ENCODE measurements at regions of chr12 and their contacts with region 1.

Region 1: DNA sequence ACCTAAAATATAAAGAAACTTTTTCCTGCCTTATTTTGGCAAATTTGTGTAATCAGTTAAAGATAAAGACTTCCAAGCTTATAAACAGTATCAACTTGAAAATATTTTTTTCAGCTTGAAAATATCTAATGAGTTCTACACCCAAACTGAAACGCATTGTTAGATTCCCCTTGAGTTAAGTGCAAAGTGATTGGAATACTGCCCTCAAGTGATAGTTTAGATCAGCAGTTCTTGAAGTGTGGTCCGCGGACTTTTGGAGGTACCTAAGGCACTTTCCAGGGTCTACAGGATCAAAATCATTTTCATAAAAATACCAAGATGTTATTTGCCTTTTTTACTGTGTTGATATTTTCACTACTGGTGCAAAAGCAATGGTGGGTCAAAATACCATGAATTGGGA is 87.9 kb downstream of the FAR2 start:
- DNase-seq: no peak
- H3K4me3 ChIP-seq: no peak overlapping the region
- H3K4me3 Mint-ChIP-seq: no peak overlapping the region
- H3K27ac Mint-ChIP-seq: no peak overlapping the region
- H3K4me1 ChIP-seq: no peaks in the 10 kb centered on the region
- H3K4me1 Mint-ChIP-seq: peaks cover 7% of the 10 kb centered on the region
- H3K27me3 ChIP-seq: no peaks in the 10 kb centered on the region
- H3K27me3 Mint-ChIP-seq: no peaks in the 10 kb centered on the region
- CTCF ChIP-seq: no peak

Region 2: DNA sequence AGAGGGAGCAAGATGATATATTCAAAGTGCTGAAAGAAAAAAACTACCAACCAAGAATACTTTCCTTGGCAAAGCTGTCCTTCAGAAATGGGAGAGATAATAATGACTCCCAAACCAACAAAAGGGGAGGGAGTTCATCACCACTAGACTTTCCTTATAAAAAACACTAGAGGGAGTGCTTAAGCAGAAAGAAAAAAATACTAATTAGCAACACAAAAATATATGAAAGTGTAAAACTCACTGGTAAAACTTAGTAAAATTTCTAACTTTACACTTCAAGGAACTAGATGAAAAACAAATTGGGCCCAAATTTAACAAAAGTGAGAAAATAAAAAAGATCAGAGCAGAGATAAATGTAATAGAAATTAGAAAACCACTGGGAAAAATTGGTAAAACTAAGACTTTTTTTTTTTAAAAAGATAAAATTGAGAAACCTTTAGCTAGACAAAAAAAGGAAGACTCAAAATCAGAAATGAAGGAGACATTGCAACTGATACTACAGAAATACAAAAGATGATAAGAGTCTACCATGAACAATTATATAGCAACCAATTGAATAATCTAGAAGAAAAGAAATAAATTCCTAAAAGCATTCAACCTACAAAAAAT is 148.3 kb before region 1 on chr12:
- CTCF ChIA-PET with region 1: no interaction called
- POLR2A ChIA-PET with region 1: no interaction called
- intact Hi-C with region 1: loop called (anchors 2 kb)
- DNase-seq: no peak
- H3K4me3 ChIP-seq: no peak overlapping the region
- H3K4me3 Mint-ChIP-seq: no peak overlapping the region
- H3K27ac Mint-ChIP-seq: no peak overlapping the region
- H3K4me1 ChIP-seq: no peaks in the 10 kb centered on the region
- H3K4me1 Mint-ChIP-seq: no peaks in the 10 kb centered on the region
- H3K27me3 ChIP-seq: no peaks in the 10 kb centered on the region
- H3K27me3 Mint-ChIP-seq: peaks cover 2% of the 10 kb centered on the region
- CTCF ChIP-seq: peak; percentile 37 to 64